ENCODE measurements at regions of chr11 and their contacts with region 1.

Region 1: GRCh38 chr11:20110908-20111669 is 49.2 kb downstream of the DBX1 start:
- DNase-seq: peak; percentile 62
- H3K4me3 Mint-ChIP-seq: no peak overlapping the region
- H3K27ac Mint-ChIP-seq: no peak overlapping the region
- H3K4me1 Mint-ChIP-seq: peaks cover 4% of the 10 kb centered on the region
- H3K27me3 Mint-ChIP-seq: peaks cover 5% of the 10 kb centered on the region

Region 2: GRCh38 chr11:19951558-19952115 is 159.5 kb before region 1 on chr11:
- CTCF ChIA-PET with region 1: interaction called, 39 read pairs
- DNase-seq: no peak
- H3K4me3 Mint-ChIP-seq: peak overlapping the region; percentile 32
- H3K27ac Mint-ChIP-seq: no peak overlapping the region
- H3K4me1 Mint-ChIP-seq: peaks cover 8% of the 10 kb centered on the region
- H3K27me3 Mint-ChIP-seq: peaks cover 15% of the 10 kb centered on the region

Measured in activated naive CD4-positive, alpha-beta T cell treated with anti-CD3 and anti-CD28 coated beads, Interleukin-2, amount 10 ng/mL, durations not matched to agents 7 days and 5 days (primary cell).